ENCODE measurements at regions of chr10 and their contacts with region 1.

Region 1: DNA sequence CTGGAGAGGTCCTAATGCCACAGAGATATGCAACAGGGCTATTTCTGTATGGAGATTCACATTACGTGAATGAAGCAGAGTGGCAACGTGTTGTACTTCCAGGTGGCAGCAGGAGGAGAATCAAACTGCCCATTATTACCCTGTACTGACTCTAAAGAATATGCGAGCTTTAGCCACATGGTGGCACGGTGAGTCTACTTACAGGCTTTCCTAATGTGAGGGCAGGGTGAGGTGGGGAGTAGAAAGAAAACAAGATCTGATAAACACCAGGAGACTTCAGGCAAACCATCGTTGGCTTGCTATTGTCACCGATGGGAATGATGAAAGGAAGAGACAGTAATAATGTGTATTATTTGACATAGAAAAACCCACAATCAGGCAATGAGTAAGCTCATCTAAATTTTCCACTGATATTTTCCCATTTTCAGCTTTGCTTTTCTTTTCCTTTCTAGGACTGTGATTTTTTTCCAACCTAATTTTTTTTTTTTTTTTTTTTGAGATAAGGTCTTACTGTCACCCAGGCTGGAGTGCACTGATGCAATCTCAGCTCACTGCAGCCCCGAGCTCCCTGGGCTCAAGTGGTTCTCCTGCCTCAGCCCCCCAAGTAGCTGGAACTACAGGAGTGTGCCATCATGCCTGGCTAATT is 164.3 kb downstream of the BTAF1 start:
- DNase-seq: peak in 1 of 2 donors; percentile 78
- ATAC-seq: peak; percentile 92 to 96 (median 94)
- H3K4me3 ChIP-seq: no peak overlapping the region
- H3K27ac ChIP-seq: peak overlapping the region in 6 of 10 donors; percentile 2 to 55 (median 38)
- H3K4me1 ChIP-seq: peaks cover 0 to 40% (median 22%) of the 10 kb centered on the region in 9 donors
- H3K27me3 ChIP-seq: no peaks in the 10 kb centered on the region
- CTCF ChIP-seq: peak; percentile 62 to 86 (median 72)

Region 2: GRCh38 chr10:92011560-92012214 is 76.2 kb before region 1 on chr10:
- intact Hi-C with region 1: no loop called
- DNase-seq: no peak
- ATAC-seq: no peak
- H3K4me3 ChIP-seq: no peak overlapping the region
- H3K27ac ChIP-seq: no peak overlapping the region
- H3K4me1 ChIP-seq: no peaks in the 10 kb centered on the region
- H3K27me3 ChIP-seq: no peaks in the 10 kb centered on the region
- CTCF ChIP-seq: no peak

Region 3: DNA sequence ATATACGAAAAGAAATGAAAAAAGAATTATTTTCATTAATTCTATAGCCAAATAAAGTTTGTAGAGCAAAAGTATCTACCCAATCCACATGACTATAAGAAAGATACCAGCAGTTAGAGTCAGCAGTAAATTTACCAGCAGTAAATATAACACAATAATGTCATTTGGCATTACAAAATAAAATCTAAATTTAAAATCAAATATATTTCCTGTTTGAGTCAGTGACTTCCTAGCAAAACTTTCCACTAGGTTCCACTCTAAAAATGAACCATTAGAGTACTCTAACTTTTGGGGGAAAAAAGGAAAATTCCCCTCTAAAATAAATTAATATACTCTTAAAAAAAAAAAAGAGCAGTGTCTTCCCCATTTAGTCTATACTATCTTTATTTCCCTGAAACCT is 58.2 kb after region 1 on chr10:
- intact Hi-C with region 1: loop called in 1 of 10 experiments (anchors 5 kb)
- DNase-seq: no peak
- ATAC-seq: peak in 3 of 8 donors; percentile 41 to 50 (median 46)
- H3K4me3 ChIP-seq: no peak overlapping the region
- H3K27ac ChIP-seq: peak overlapping the region in 8 of 10 donors; percentile 22 to 62 (median 46)
- H3K4me1 ChIP-seq: peaks cover 0 to 64% (median 41%) of the 10 kb centered on the region in 9 donors
- H3K27me3 ChIP-seq: no peaks in the 10 kb centered on the region
- CTCF ChIP-seq: no peak

Region 4: DNA sequence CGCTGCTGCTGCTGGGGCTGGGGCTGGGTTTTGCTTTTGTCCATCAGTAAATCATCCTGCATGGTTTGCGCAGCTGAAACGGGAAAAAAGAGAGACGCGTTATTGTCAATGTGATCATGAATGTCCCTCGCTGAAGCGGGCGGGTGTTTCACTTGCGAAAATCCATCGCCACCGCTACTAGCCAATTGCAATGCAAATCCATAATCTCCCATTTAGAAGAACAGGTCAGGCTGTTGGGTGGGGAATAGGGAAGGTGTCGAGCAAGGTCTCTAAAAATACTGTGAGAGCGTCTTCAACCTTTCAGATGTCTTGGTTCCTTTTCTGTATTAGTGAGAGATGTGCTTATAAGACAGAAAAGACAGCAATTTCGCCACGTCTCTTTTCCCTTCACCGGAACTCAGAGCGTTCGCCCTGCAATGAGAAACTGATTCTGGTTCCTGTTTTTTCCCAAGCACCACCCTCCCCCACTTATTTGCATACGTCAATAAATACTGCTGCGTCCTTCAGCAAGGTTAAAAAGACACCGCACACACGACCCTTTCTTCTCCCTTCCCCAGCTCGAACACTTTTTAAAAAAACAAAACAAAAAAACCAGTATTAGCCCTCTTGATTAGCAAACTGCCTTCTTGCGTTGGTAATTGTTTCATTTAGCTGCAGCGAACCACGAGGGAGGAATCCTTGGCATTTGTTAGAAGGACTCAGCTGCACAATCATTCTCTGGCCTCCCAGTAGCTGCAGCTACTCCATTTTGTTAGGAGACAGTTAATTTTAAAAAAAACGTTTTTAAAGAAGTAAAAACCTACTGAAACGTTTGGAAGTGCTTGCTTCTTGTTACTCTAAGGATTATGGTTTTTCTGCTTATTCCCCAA is 152.7 kb after region 1 on chr10:
- intact Hi-C with region 1: loop called in 5 of 10 experiments (anchors 2 to 5 kb)
- DNase-seq: peak in 1 of 2 donors; percentile 80
- ATAC-seq: peak; percentile 69 to 85 (median 80)
- H3K4me3 ChIP-seq: peak overlapping the region; percentile 58 to 91 (median 76)
- H3K27ac ChIP-seq: peak overlapping the region; percentile 77 to 94 (median 87)
- H3K4me1 ChIP-seq: peaks cover 3 to 64% (median 41%) of the 10 kb centered on the region in 9 donors
- H3K27me3 ChIP-seq: no peaks in the 10 kb centered on the region
- CTCF ChIP-seq: no peak

Region 5: GRCh38 chr10:92290837-92291615 is 203.2 kb after region 1 on chr10 and contains the starts of genes CPEB3 and MARCHF5:
- intact Hi-C with region 1: loop called in 8 of 10 experiments (anchors 2 to 10 kb)
- DNase-seq: peak; percentile 96
- ATAC-seq: peak; percentile 99
- H3K4me3 ChIP-seq: peak within 1 kb of the TSS; percentile 79 to 99 (median 98)
- H3K27ac ChIP-seq: peak within 1 kb of the TSS; percentile 87 to 99 (median 96)
- H3K4me1 ChIP-seq: peaks cover 0 to 35% (median 17%) of the 10 kb centered on the region in 9 donors
- H3K27me3 ChIP-seq: no peaks in the 10 kb centered on the region
- CTCF ChIP-seq: peak; percentile 49 to 76 (median 64)
- total RNA-seq, gene CPEB3: 7.2 to 17.6 (median 13.7) TPM
- total RNA-seq, gene MARCHF5: 25.6 to 40.1 (median 33.9) TPM

Region 6: GRCh38 chr10:92486637-92487036 is 398.8 kb after region 1 on chr10:
- intact Hi-C with region 1: no loop called
- DNase-seq: no peak
- ATAC-seq: no peak
- H3K4me3 ChIP-seq: no peak overlapping the region
- H3K27ac ChIP-seq: peak overlapping the region in 1 of 10 donors; percentile 13
- H3K4me1 ChIP-seq: peaks cover 0 to 15% (median 0%) of the 10 kb centered on the region in 9 donors
- H3K27me3 ChIP-seq: no peaks in the 10 kb centered on the region
- CTCF ChIP-seq: no peak